BJ (cell line): ENCODE measurements at regions of chr10 and their contacts with region 1.

Region 1: DNA sequence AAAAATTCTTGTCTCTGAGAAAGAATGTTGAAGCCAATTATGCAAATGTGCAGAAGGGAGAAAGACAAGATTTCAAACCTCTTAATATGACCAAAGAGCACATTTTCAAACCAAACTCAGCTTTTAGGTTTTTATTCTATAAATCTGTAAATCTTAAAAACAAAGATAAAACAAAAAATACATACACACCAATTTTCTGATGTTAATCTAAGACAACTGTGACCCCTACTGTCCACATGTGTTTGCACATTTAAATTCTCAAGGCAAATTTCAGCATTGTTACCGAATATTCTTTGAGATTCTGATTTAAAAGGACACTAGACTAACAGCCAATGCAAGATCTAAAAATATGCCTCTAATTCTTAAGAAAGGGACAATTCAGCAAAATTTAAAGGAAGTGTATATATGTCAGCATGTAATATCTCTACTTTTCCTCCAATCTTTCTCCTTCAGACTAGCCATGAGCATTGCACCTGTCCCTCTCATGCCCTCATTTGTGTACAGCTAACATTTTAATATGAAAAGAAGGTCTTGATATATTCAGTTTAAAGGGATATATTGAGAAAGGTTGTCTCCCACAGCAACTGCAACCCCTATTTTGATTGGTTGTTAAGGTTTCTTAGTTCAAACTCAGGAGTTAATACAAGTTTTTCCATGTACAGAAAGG is 417.9 kb downstream of the IPMK start:
- DNase-seq: no peak
- H3K4me3 ChIP-seq: no peak overlapping the region
- H3K27me3 ChIP-seq: no peaks in the 10 kb centered on the region
- CTCF ChIP-seq: peak; percentile 24

Region 2: DNA sequence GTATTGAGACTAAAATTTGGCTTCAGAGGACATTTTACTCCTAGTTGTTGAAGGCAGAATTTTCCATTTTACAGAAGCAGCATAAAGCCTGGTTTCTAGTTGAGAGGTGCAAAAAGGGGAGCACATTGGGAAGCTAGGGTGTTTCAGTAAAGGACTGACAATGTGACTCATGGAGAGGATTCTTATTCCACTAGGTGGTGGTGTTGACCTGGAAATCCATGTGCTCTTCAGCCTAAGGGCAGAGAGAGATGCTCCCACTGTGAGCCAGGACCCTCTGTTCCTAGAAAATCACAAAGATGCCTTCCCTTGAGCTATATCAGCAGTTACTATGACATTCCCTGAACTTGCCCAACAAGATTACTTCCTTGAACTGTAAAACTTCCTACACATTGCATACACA is 269.9 kb before region 1 on chr10:
- CTCF ChIA-PET with region 1: interaction called, 15 read pairs
- POLR2A ChIA-PET with region 1: no interaction called
- DNase-seq: no peak
- H3K4me3 ChIP-seq: no peak overlapping the region
- H3K27me3 ChIP-seq: no peaks in the 10 kb centered on the region
- CTCF ChIP-seq: peak; percentile 33; the same call in 1 of the 2 replicates

Region 3: GRCh38 chr10:57706576-57707299 is 143.1 kb before region 1 on chr10:
- CTCF ChIA-PET with region 1: no interaction called
- POLR2A ChIA-PET with region 1: no interaction called
- DNase-seq: no peak
- H3K4me3 ChIP-seq: no peak overlapping the region
- H3K27me3 ChIP-seq: no peaks in the 10 kb centered on the region
- CTCF ChIP-seq: no peak

Region 4: GRCh38 chr10:58220769-58221451 is 371.1 kb after region 1 on chr10:
- CTCF ChIA-PET with region 1: no interaction called
- POLR2A ChIA-PET with region 1: no interaction called
- DNase-seq: peak; percentile 33
- H3K4me3 ChIP-seq: no peak overlapping the region
- H3K27me3 ChIP-seq: no peaks in the 10 kb centered on the region
- CTCF ChIP-seq: no peak